ENCODE measurements at regions of chr1 and their contacts with region 1.

Region 1: GRCh38 chr1:35641233-35641866 is at the start of gene PSMB2:
- DNase-seq: peak; percentile 96 to 99
- ATAC-seq: peak; percentile 98
- total RNA-seq, gene PSMB2: 40.2 to 49.1 TPM

Region 2: DNA sequence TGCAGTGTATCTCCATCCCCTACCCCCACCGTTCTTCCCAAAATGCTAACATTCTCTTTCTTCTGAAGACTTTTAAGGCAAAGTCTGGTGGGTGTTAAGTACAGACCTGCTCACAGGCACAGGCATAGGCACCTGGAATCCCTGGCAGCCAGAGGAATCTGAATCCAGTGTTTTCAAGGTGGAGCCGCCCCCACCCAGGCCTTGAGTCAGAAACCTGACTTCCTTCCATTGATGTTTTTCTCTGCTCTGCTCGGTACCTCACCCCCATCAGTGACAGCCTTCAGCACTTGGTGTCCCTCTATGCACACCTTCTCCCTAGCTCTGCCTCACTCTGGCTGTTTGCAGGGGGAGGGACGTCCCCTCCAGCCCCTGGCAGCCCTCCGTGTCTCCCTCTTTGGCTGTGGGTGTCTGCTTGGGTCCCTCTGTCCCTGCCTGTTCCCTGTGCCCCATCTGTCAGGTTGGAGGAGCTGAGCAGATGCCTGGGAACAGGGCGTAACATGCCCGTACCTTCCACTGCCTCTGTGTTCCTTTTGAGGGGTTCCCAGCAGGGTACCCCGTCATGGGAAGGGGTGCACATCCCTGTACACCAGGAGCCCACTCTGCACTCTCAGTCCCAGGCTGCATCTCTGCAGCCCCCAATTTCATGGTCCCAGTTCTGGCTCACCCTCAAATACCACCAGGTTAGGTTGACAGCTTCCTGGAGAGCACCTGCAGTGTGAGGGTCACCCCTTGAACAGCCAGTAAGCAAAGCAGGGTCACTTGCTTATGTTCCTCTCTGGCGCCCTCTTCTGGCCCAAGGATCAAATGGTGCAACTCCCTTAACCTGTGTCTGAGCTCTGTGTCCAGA is 77.1 kb before region 1 on chr1:
- intact Hi-C with region 1: no loop called
- DNase-seq: peak; percentile 65 to 89
- ATAC-seq: peak; percentile 73

Region 3: GRCh38 chr1:35715568-35716002 is 74.2 kb after region 1 on chr1:
- intact Hi-C with region 1: loop called in 1 of 2 experiments (anchors 10 kb)
- DNase-seq: peak; percentile 68 to 86
- ATAC-seq: peak; percentile 85

Measured in left colon (tissue), 2 donors.